Left cardiac atrium (tissue), 4 donors: ENCODE measurements at regions of chr7 and their contacts with region 1.

Region 1: DNA sequence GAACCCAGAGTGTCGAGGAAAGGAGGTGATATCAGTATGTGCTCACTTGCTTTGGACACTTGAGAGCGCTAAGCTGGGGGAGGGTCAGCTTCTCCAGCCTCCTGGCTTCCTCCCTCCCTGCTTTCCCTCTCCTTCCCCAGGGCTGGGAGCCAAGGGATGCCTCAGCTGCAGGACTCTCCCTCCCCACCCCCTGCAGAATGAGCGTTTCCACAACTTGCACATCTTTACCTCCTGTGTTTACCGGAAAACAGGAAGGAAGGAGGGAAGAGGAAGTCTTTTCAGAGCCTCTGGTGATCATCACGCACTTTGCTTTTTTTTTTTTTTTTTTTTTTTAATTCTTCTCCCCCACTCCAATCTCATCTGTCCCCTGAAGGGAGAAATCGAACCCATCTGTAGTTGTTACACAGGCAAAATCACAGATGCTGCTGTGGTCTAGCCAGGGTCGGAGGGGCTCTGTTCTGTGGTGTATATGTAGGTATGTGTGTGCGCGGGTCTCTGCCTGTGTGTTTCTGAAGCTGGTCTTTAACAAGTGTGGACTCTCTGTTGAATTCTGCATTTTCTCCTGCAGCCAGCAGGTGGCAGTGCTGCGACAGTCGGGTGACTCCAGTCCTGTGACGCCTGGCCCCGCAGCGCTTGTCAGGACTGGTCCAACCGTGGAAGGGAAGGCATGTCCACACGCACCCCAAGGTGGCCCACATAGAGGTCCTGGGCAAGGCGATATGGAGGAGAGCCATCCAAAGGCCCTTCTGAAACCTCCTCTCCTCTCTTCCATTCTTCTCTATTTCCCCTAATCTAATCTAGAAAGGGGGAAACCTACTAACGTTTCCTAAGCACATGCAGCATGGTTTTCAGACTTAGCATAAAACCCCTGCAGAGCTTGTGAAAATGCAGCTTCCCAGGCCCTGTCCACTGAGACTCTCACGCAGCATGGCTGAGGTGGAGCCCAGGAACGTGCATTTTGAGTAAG is 257.6 kb downstream of the PLXNA4 start:
- DNase-seq: peak; percentile 88
- ATAC-seq: peak; percentile 89 to 91

Region 2: DNA sequence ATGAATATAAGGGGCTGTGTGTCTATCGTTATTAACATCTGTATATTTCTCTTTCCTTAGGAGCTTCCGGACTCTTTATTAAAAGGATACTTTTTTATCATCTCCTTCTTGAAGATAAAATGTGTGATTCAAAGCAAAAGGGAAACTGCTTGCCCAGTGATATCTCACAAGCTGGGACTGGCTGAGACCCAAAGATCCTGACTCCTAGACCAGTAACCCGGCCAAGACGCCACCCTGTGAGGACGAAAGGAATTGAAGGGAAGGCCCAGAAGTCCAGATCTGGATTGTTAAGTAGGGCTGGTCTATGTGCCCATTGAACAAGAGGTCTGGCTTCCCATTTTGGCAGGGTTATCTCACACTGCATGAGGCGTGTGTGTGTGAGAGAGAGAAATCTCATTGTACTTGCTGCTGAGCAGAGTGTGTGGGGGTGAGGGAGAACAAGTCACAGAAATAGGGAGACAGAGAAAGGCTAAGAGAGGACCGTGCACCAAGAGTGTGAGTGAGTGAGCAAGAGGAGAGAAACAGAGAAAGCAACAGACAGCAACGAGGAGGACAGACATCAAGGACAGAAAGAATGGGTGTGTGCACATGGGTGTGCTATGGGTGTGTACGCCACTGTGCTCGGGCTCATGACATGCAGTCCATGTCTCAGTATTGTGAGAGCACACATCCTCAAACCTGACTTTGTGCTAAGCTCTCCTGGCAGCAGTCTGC is 182.2 kb after region 1 on chr7:
- intact Hi-C with region 1: loop called (anchors 5 kb)
- DNase-seq: peak; percentile 90
- ATAC-seq: peak; percentile 77 to 92

Region 3: GRCh38 chr7:132557489-132558044 is 238.9 kb after region 1 on chr7:
- intact Hi-C with region 1: no loop called
- DNase-seq: no peak
- ATAC-seq: no peak